ENCODE measurements at regions of chr14 and their contacts with region 1.

Region 1: GRCh38 chr14:19878029-19878642 is 3.2 kb downstream of the OR4K2 start:
- DNase-seq: peak; percentile 12
- H3K4me3 ChIP-seq: no peak overlapping the region
- H3K27ac ChIP-seq: no peak overlapping the region
- H3K4me1 ChIP-seq: no peaks in the 10 kb centered on the region
- H3K27me3 ChIP-seq: no peaks in the 10 kb centered on the region
- CTCF ChIP-seq: peak; percentile 46 to 49

Region 2: DNA sequence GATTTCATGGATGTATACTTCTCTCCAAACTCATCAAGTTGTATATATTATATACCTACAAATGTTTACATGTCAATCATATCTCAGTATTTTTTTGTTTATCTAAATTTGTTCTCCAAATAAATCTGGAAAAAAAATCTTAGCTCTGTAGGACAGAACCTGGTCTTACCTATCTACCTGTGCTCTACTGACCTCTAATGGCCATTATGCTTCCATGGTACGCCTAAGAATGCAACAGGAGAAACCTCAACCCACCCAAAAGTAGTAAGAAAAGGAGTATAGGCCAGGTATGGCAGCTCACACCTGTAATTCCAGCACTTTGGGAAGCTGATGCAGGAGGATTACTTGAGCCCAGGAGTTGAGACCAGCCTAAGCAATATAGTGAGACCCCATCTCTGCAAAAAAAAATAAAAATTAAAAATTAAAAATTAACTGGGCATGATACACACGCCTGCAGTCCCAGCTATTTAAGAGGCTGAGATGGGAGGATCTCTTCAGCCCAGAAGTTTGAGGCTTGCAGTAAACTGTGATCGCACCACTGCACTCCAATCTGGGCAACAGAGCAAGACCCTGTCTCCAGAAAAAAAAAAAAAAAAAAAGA is 369.6 kb after region 1 on chr14:
- CTCF ChIA-PET with region 1: no interaction called
- dilution Hi-C with region 1: no loop called
- in situ Hi-C with region 1: no loop called
- intact Hi-C with region 1: loop called (anchors 5 kb)
- DNase-seq: peak; percentile 16
- H3K4me3 ChIP-seq: no peak overlapping the region
- H3K27ac ChIP-seq: no peak overlapping the region
- H3K4me1 ChIP-seq: no peaks in the 10 kb centered on the region
- H3K27me3 ChIP-seq: no peaks in the 10 kb centered on the region
- CTCF ChIP-seq: peak; percentile 54 to 72